Left colon (tissue), 2 donors: ENCODE measurements at regions of chr19 and their contacts with region 1.

Region 1: DNA sequence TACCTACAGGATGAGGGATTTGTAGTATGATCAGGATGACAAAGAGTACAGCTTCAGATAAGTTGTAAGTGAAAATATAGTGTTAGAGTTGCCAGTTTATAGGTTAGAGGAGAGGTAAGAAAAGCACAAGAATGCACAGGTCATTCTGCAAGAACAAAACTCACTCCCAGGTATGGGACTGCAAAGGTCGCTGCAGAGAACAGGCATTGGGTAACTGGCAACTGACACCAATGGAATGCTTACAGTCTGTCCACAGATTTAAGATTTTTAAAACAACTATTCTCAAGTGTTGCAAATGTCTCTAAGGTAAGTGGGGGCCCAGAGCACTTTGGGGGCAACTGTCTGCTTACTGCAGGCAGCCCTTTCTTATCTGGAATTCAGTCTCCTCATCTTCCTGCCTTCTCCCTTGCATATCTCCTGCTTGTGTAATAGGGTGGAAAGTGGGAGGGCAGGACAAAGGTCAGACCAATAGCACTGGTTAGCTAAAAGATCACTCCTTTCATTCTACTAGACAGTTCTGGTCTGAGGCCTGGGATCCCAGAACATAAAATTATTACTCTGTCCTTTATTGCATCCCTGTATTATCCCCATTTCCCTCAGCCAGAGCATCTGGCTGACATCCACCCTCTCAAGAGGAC is 42.3 kb upstream of the ZNF726 start:
- DNase-seq: no peak
- ATAC-seq: no peak

Region 2: DNA sequence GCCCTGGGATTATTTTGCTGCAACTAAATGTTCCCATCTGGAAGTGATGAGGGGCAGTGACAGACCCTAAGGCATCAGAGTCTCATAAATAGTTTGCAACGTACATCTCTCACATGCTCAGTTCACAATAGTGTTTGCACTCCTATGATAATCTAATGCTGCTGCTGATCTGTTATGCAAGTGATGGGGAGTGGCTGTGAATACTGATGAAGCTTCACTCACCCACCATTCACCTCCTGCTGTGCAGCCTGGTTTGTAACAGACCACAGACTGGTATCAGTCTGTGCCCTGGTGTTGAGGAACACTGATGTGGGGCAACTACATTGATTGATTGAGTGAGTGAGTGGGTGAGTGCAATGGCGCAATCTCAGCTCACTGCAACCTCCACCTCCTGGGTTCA is 97.2 kb after region 1 on chr19:
- intact Hi-C with region 1: loop called (anchors 5 kb)
- DNase-seq: no peak
- ATAC-seq: no peak

Region 3: DNA sequence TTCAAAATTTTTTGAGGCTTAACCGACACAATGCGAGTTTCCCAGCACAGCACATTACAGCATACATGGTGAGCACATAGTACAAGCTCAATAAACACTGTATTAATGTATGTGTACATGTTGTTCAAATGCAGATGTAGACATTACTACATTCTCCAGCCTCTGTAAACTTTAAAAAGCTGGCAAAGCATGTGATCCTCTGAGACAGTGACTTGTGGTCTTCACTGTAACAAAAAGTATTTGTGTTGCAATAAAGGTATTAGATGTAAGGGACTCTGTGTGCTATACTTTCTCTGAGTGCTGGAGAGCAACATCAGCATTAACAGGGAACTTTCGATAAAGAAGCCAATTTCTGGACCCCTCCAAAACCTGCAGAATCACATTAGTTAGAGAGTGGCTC is 168.2 kb after region 1 on chr19:
- intact Hi-C with region 1: no loop called
- DNase-seq: no peak
- ATAC-seq: no peak